Prostate gland (tissue), 2 donors: ENCODE measurements at regions of chr7 and their contacts with region 1.

Region 1: DNA sequence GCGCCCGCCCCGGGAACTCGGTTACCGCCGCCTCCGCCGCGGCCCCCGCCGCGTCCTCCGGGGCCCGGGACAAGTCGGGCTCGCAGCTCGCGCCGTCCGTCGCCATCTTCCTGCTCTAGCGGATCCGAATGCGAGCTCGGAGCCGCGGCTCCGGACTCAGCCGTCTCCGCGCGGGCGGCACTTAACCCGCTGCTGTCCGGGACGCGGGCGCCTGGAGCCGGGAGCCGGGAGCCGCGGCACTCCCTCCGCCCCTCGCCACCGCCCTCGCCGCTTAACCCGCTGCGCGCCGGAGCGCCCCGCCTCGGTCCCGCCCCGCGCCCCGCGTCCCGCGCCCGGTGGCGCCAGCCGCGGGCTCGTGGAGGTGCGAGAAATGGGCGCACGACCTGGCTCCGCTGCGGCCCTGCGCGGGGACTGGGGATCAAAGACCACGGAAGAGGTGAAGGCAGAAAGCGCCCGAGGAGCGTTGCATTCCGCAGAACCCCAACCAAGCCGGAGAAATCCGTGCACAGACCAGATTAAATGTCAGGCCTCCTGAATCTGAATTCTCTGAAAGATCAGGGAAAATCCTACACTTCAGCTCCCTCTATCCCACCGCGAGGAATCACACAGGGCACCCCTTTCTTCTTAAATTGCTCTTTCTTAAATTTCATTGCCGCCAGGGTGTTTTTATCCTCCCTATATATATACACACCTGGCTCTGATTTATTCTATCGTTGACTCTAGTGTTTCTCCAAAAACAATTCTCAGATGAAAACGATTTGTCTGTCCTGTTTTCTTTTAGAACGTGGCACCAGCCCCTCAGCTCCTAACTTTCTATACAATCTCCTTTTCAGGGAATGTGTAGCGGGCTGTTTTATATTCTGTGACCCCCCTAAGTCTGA is at the start of gene CTTNBP2:
- DNase-seq: peak; percentile 27
- H3K4me3 ChIP-seq: peak within 1 kb of the TSS; percentile 73 to 76
- H3K27ac ChIP-seq: peak within 1 kb of the TSS; percentile 73 to 77
- H3K4me1 ChIP-seq: no peaks in the 10 kb centered on the region
- H3K27me3 ChIP-seq: no peaks in the 10 kb centered on the region
- CTCF ChIP-seq: no peak
- POLR2A ChIP-seq: no peak
- total RNA-seq, gene CTTNBP2: 5.7 to 8.3 TPM

Region 2: DNA sequence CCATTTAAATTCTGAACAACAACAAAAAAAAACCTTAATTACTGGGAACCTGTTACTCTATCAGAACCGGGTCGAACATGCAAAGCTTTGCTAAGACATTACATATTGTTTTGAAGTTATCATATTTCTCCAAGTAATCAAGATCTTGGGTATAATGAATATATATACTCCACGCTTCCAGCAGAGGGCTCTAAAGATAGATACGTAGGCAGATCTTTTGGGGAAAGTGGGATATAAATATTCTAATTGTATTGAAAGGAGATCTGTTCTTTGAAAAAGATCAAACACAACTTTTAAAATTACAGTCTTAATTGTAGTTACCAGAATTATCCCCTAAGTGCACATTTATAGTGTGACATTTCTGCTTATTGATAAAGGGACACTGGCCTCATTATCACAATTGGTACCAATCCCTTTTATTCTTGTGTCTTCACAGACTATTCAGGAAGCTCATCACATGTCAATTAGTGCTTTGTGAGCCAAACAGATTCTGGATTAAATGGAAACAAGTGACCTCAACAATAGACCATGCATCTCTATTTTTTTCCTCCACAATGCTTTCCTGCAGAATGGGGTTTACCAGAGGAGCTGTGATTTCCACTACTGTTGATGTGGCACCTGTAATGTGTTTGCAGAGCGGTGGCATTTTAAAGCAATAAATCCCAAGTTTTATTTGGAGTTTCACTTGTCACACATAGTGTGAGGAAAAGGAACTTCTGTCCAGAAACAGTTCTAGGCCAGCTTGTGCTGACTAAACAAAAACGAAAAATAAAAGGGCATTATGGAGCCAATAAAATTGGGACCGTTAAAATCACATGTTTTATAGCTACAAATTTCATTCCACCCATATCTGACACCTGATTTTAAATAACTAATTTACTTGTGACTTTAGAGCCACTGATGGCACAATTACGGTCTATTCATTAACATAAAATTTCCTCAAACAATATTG is 122.7 kb before region 1 on chr7:
- intact Hi-C with region 1: loop called (anchors 5 kb)
- DNase-seq: no peak
- H3K4me3 ChIP-seq: no peak overlapping the region
- H3K27ac ChIP-seq: no peak overlapping the region
- H3K4me1 ChIP-seq: no peaks in the 10 kb centered on the region
- H3K27me3 ChIP-seq: no peaks in the 10 kb centered on the region
- CTCF ChIP-seq: peak in 3 of 4 experiments; percentile 42 to 66 (median 65)
- POLR2A ChIP-seq: no peak

Region 3: DNA sequence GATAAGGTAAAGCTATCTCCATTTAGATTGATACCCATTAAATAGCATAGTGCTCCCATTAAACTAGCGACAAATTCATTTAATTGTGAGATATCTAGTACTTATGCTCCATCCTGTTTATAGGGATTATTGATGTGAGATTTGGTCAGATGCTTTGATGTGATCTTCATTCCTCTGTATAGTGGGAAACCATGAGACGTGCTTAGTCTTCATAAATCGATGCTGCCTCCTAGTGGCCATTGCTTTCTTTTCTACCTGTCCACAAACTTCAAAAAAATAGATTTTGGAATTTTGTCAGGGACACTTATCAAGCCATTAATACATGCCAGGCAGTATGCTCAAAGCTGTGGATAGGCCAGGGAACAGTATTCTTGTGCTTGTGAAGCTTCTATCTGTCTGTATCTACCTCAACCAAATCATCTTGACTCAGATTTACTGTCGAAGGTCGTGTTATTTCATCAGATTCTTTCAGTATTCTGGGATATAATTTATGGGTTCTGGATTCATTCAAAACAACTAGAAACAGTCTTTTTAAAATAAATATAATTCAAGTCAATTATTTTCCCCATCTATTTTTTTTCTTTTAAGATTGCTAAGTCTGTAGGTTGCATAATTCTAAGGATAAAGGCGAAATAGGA is 322.4 kb after region 1 on chr7:
- intact Hi-C with region 1: loop called (anchors 10 kb)
- DNase-seq: peak; percentile 60
- H3K4me3 ChIP-seq: no peak overlapping the region
- H3K27ac ChIP-seq: no peak overlapping the region
- H3K4me1 ChIP-seq: peaks cover 5% of the 10 kb centered on the region
- H3K27me3 ChIP-seq: no peaks in the 10 kb centered on the region
- CTCF ChIP-seq: peak in 3 of 4 experiments; percentile 56 to 59 (median 58)
- POLR2A ChIP-seq: no peak